ENCODE measurements at regions of chr1 and their contacts with region 1.

Region 1: GRCh38 chr1:183609313-183609712 is 19.1 kb upstream of the NCF2 start:
- DNase-seq: peak in 1 of 2 donors; percentile 84
- ATAC-seq: peak; percentile 91
- H3K4me3 ChIP-seq: no peak overlapping the region
- H3K27ac ChIP-seq: peak overlapping the region; percentile 39 to 48
- H3K4me1 ChIP-seq: peaks cover 3 to 8% of the 10 kb centered on the region in 2 donors
- H3K27me3 ChIP-seq: no peaks in the 10 kb centered on the region

Region 2: DNA sequence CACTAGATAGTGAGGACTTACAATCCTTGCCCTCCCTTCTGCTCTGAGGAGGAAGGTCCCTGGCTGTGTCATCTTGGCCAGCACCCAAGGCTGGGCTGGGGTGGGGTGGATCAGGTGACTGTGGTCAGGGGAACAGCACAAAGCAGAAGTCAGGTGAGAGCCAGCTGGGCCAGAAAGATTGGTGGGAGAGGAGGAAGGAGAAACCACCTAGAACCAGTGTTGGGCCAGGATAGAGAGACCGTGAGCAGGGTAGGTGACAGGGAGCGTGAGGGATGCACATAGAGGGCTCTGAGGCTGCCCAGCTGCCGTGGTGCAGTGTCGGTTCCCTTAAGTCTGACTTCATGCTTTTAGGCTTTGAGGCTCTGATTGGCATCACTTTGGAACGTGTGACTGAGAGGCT is 41.7 kb before region 1 on chr1:
- intact Hi-C with region 1: no loop called
- DNase-seq: peak in 1 of 2 donors; percentile 84
- ATAC-seq: peak; percentile 66
- H3K4me3 ChIP-seq: no peak overlapping the region
- H3K27ac ChIP-seq: no peak overlapping the region
- H3K4me1 ChIP-seq: no peaks in the 10 kb centered on the region
- H3K27me3 ChIP-seq: no peaks in the 10 kb centered on the region

Region 3: DNA sequence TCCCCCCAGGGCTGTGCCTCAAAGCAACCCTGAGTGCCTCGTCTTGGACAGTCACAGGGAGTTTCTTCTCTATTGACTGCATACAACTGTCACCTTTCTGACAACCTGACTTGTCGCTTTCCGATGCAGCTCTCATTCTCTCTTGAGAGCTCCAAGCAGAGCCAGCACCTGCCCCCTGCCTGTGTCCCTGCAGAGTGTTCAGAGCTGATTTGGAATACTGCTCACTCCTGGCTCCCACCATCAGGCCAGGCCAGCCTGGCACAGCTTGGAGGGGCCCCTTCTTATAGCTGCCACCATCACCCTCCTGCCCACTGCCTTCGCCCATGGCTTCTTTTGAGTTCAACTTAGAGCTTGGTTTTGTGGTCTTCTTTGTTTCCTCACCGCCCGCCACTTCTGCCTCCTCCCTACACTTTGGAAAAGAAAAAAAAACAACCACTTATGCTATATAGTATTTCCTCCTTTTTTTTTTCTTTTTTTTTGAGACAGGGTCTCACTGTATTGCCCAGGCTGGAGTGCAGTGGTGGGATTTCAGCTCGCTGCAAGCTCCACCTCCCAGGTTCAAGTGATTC is 31.3 kb before region 1 on chr1:
- intact Hi-C with region 1: loop called in 1 of 2 experiments (anchors 2 kb)
- DNase-seq: no peak
- ATAC-seq: no peak
- H3K4me3 ChIP-seq: no peak overlapping the region
- H3K27ac ChIP-seq: no peak overlapping the region
- H3K4me1 ChIP-seq: peaks cover 7 to 13% of the 10 kb centered on the region in 2 donors
- H3K27me3 ChIP-seq: no peaks in the 10 kb centered on the region

Measured in aorta (tissue), 5 donors.